Motor neuron (in vitro differentiated cells): ENCODE measurements at regions of chr12 and their contacts with region 1.

Region 1: DNA sequence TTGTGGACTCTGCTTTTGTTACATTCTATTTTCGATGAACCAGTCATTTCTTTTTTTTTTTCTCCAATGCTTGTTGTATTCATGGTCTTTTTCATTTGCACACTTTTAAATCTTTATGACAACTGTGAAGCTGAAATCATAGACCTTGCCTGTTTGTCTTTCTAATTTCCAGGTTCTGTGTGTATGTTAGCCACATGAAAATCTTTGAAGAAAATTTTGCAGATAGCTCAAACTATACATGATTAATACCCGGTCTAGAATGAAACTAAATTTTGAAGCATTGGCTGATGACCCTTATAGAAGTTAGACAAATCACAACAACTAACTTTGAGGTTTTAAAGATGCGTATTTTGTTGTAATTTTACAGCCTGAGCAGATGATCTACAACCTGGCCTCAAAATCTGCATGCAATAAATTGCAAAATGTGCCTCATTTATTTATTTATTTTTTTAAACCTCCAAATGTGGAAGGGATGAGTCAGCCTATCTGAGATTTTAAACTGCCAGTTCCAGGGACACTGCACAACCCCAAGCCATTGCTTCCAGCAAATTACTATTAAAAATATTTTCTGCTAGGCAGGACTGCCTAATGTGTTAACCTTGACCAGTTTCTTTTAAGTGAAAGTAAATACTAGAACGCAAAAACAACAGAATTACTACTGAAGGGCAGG is 96.3 kb upstream of the NAV3 start:
- ATAC-seq: peak; percentile 72 to 98 (median 78)
- H3K4me3 ChIP-seq: no peak overlapping the region
- H3K27ac ChIP-seq: no peak overlapping the region
- H3K4me1 ChIP-seq: peaks cover 0 to 22% of the 10 kb centered on the region in 2 donors

Region 2: DNA sequence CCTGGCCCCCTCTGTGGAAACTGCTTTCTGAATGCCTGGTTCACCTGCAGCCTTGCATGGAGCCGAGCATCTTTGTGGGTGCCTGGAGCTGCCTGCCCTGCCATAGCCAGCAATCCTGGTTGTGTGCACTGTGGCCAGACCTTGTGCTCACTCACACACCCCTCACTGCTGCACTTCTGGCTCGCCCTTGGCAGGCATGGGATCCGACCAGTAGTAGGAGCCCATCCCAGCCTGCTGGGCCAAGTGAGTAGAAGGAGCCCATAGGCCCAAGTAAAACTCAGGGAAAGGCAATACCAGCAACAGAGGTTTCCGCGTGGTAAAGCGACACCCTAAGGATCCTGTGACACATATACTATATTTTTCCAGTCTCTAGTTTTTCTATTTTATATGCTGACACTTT is 173.6 kb before region 1 on chr12:
- in situ Hi-C with region 1: no loop called
- ATAC-seq: no peak
- H3K4me3 ChIP-seq: no peak overlapping the region
- H3K27ac ChIP-seq: no peak overlapping the region
- H3K4me1 ChIP-seq: no peaks in the 10 kb centered on the region

Region 3: DNA sequence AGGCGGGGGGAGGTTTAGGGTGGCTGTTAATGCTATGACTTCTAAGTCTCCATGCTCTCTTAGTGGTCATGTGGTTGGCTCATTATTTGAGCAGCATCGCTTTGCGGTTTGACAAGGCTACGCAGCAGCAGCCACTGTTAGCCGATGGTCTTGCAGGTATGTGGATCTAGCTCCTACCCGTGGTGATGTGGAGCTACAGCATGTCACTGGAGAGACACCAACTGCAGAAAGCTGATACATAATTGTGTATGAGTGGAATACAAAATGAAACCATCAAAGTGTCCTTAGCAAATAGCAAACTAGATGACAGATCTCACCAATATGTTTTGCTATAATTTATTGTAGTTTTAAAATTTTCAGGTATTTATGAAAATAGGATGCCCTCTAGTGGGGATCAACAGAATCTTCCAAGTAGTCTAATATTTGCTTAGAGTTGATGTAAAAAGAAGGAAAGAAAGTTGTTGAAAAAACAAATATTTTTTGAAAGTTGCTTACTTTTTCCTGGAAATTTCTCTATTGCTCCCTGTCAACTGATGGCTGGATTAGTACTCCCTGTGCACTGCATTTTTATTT is 191.3 kb after region 1 on chr12:
- in situ Hi-C with region 1: loop called in 3 of 9 experiments (anchors 10 to 25 kb)
- ATAC-seq: peak; percentile 86 to 100 (median 100)
- H3K4me3 ChIP-seq: no peak overlapping the region
- H3K27ac ChIP-seq: no peak overlapping the region
- H3K4me1 ChIP-seq: no peaks in the 10 kb centered on the region